OCI-LY7 (cell line): ENCODE measurements at regions of chr7 and their contacts with region 1.

Region 1: GRCh38 chr7:130114374-130115135 is 44.2 kb downstream of the KLHDC10 start:
- DNase-seq: peak; percentile 35
- H3K4me3 ChIP-seq: no peak overlapping the region
- H3K27ac ChIP-seq: no peak overlapping the region
- H3K4me1 ChIP-seq: peaks cover 18% of the 10 kb centered on the region
- CTCF ChIP-seq: no peak

Region 2: GRCh38 chr7:129998446-129998845 is 116.1 kb before region 1 on chr7:
- CTCF ChIA-PET with region 1: no interaction called
- POLR2A ChIA-PET with region 1: no interaction called
- intact Hi-C with region 1: no loop called
- DNase-seq: no peak
- H3K4me3 ChIP-seq: no peak overlapping the region
- H3K27ac ChIP-seq: no peak overlapping the region
- H3K4me1 ChIP-seq: no peaks in the 10 kb centered on the region
- CTCF ChIP-seq: no peak

Region 3: GRCh38 chr7:131131746-131132431 is 1017.3 kb after region 1 on chr7:
- CTCF ChIA-PET with region 1: no interaction called
- POLR2A ChIA-PET with region 1: interaction called, 11 read pairs
- intact Hi-C with region 1: no loop called
- DNase-seq: no peak
- H3K4me3 ChIP-seq: no peak overlapping the region
- H3K27ac ChIP-seq: no peak overlapping the region
- H3K4me1 ChIP-seq: no peaks in the 10 kb centered on the region
- CTCF ChIP-seq: no peak